Mucosa of descending colon (tissue), 3 donors: ENCODE measurements at regions of chr19 and their contacts with region 1.

Region 1: GRCh38 chr19:51479531-51480331 is 1.4 kb downstream of the CEACAM18 start:
- DNase-seq: no peak
- ATAC-seq: no peak
- H3K4me3 ChIP-seq: no peak overlapping the region
- H3K4me1 ChIP-seq: no peaks in the 10 kb centered on the region
- CTCF ChIP-seq: no peak

Region 2: DNA sequence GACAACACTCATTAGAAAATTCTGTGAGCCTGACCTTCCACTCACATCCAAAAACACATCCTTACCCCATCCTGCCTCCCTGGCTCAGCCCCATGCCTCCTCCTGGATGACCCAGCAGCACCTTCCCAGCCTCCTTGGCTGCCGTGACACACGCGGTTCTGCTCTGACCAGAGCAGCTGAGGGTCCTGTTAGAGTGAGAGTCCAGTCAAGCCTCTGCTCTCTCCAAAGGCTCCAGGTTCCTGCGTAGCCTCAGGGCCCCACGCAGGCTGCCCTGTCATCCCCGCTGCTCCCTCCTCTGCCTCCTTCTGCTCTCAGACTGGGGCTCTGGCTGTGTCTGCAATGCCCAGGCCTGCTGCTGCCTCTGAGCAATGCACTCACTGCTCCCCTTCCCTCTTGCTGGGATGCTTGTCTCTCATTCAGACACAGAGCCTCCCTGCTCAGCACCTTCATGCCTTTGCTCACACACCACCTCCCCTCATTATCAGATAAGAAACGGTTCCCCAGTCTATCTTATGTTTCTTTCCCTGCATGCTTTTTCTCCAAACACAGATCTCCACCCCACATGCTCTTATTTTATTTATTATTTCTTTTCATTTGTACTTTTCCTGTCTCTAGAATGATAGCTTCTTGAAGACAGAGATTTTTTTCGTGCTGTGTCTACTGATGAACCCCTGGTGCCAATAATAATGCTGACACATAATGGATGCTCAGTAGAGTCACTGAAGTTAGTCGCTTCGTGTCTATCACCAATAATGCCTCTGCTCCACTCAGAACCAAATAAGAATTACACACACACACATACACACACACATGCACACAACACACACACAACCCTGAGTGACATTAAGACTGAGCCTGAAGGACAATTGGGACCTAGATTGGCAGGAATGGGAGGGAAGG is 62.0 kb after region 1 on chr19:
- intact Hi-C with region 1: no loop called
- DNase-seq: no peak
- ATAC-seq: no peak
- H3K4me3 ChIP-seq: no peak overlapping the region
- H3K4me1 ChIP-seq: no peaks in the 10 kb centered on the region
- CTCF ChIP-seq: no peak

Region 3: GRCh38 chr19:51654783-51655182 is 175.1 kb after region 1 on chr19:
- intact Hi-C with region 1: loop called in 1 of 2 experiments (anchors 5 kb)
- DNase-seq: no peak
- ATAC-seq: no peak
- H3K4me3 ChIP-seq: no peak overlapping the region
- H3K4me1 ChIP-seq: no peaks in the 10 kb centered on the region
- CTCF ChIP-seq: no peak